ENCODE measurements at regions of chr15 and their contacts with region 1.

Region 1: DNA sequence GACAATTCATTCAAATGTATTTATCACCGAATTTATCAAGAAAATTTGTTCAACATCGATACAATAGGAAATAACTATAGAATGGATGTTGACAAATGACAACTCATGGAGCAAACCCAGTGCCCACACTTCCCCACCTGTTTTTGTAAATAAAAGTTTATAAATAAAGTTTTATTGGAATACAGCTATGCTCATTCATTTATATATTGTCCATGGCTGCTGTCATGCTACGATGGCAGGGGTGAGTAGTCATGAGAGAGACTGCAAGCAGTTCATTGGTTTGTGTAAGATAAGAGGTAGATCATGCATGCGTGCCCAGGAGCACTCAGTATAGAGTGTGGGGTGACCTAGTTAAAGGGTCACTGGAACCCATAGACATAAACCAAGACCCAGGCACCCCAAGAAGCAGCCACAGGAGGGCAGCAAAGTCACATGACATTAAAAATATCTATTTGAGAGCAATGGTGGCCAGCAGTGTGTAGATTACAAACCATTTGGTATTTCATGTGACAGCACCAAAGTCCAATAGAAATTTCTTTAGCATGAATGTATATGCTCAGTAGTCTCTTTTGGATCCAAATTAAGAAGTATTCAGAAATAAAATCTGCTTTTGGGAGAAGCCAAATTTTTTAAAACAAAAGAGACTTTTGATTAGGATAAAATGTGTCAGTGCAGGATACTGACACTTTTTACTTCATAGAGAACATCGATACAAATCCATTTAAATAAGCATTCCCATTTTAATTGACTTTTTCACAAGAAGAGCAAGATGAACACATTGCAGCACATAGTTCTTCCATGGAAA is 794.8 kb downstream of the MCTP2 start:
- DNase-seq: peak in 3 of 5 donors; percentile 16 to 27 (median 26)
- ATAC-seq: peak in 2 of 4 donors; percentile 33 to 47
- H3K4me3 ChIP-seq: no peak overlapping the region
- H3K27ac ChIP-seq: no peak overlapping the region
- H3K4me1 ChIP-seq: no peaks in the 10 kb centered on the region
- H3K27me3 ChIP-seq: no peaks in the 10 kb centered on the region
- CTCF ChIP-seq: peak; percentile 36 to 66 (median 47)
- POLR2A ChIP-seq: no peak

Region 2: GRCh38 chr15:94670438-94671034 is 355.6 kb before region 1 on chr15:
- intact Hi-C with region 1: loop called in 3 of 10 experiments (anchors 5 to 10 kb)
- DNase-seq: no peak
- ATAC-seq: peak in 2 of 4 donors; percentile 52 to 54
- H3K4me3 ChIP-seq: no peak overlapping the region
- H3K27ac ChIP-seq: peak overlapping the region in 2 of 12 donors; percentile 6 to 21
- H3K4me1 ChIP-seq: peaks cover 0 to 15% (median 5%) of the 10 kb centered on the region in 12 donors
- H3K27me3 ChIP-seq: peaks cover 0 to 7% (median 0%) of the 10 kb centered on the region in 9 donors
- CTCF ChIP-seq: peak; percentile 63 to 86 (median 72)
- POLR2A ChIP-seq: no peak

Region 3: DNA sequence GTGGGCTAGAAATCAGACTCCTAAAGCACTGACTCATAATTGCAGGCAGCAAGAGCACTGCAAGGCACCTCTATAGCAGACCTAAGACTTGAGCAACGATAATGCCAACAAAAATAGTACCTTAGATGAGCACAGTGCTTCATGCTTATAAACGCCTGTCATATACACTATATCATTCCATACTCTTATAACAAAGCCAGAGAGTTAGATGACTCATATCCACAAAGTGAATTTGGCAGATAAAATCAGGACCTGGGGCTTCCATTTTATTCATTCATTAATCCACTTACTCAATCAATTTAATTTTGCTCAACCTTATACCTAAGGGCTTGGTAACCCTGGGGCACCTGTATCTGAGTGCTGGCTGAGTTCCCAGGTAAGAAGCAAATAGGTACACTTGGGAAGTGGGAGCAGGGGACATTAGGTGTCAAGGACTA is 233.8 kb before region 1 on chr15:
- intact Hi-C with region 1: no loop called
- DNase-seq: no peak
- ATAC-seq: no peak
- H3K4me3 ChIP-seq: no peak overlapping the region
- H3K27ac ChIP-seq: no peak overlapping the region
- H3K4me1 ChIP-seq: no peaks in the 10 kb centered on the region
- H3K27me3 ChIP-seq: no peaks in the 10 kb centered on the region
- CTCF ChIP-seq: no peak
- POLR2A ChIP-seq: no peak

Region 4: GRCh38 chr15:95162967-95163531 is 136.9 kb after region 1 on chr15:
- intact Hi-C with region 1: loop called in 1 of 10 experiments (anchors 5 kb)
- DNase-seq: no peak
- ATAC-seq: peak in 2 of 4 donors; percentile 32 to 69
- H3K4me3 ChIP-seq: no peak overlapping the region
- H3K27ac ChIP-seq: peak overlapping the region in 6 of 12 donors; percentile 3 to 59 (median 26)
- H3K4me1 ChIP-seq: peaks cover 0 to 8% (median 0%) of the 10 kb centered on the region in 12 donors
- H3K27me3 ChIP-seq: peaks cover 0 to 4% (median 0%) of the 10 kb centered on the region in 9 donors
- CTCF ChIP-seq: no peak
- POLR2A ChIP-seq: no peak

Region 5: GRCh38 chr15:95291898-95292472 is 265.9 kb after region 1 on chr15:
- intact Hi-C with region 1: loop called in 2 of 10 experiments (anchors 10 kb)
- DNase-seq: no peak
- ATAC-seq: no peak
- H3K4me3 ChIP-seq: no peak overlapping the region
- H3K27ac ChIP-seq: no peak overlapping the region
- H3K4me1 ChIP-seq: peaks cover 0 to 33% (median 5%) of the 10 kb centered on the region in 12 donors
- H3K27me3 ChIP-seq: no peaks in the 10 kb centered on the region
- CTCF ChIP-seq: peak; percentile 47 to 78 (median 66)
- POLR2A ChIP-seq: no peak

Region 6: GRCh38 chr15:96345560-96346399 is 1319.7 kb after region 1 on chr15:
- intact Hi-C with region 1: loop called in 4 of 10 experiments (anchors 10 kb)
- DNase-seq: peak in 4 of 5 donors; percentile 74 to 85 (median 82)
- ATAC-seq: peak; percentile 62 to 85 (median 76)
- H3K4me3 ChIP-seq: peak overlapping the region; percentile 22 to 91 (median 67)
- H3K27ac ChIP-seq: peak overlapping the region; percentile 2 to 96 (median 92)
- H3K4me1 ChIP-seq: peaks cover 0 to 76% (median 22%) of the 10 kb centered on the region in 12 donors
- H3K27me3 ChIP-seq: peaks cover 0 to 95% (median 20%) of the 10 kb centered on the region in 9 donors
- CTCF ChIP-seq: peak; percentile 44 to 77 (median 68)
- POLR2A ChIP-seq: peak in 1 of 2 donors; percentile 45